Heart right ventricle (tissue), 16 donors: ENCODE measurements at regions of chr2 and their contacts with region 1.

Region 1: GRCh38 chr2:85712849-85713602 is 18.9 kb downstream of the GNLY start:
- DNase-seq: peak; percentile 58 to 64
- ATAC-seq: peak in 6 of 8 donors; percentile 5 to 80 (median 60)
- H3K4me3 ChIP-seq: no peak overlapping the region
- H3K27ac ChIP-seq: peak overlapping the region; percentile 67 to 96 (median 86)
- H3K4me1 ChIP-seq: peaks cover 9 to 80% (median 59%) of the 10 kb centered on the region in 9 donors
- H3K27me3 ChIP-seq: no peaks in the 10 kb centered on the region
- CTCF ChIP-seq: no peak

Region 2: DNA sequence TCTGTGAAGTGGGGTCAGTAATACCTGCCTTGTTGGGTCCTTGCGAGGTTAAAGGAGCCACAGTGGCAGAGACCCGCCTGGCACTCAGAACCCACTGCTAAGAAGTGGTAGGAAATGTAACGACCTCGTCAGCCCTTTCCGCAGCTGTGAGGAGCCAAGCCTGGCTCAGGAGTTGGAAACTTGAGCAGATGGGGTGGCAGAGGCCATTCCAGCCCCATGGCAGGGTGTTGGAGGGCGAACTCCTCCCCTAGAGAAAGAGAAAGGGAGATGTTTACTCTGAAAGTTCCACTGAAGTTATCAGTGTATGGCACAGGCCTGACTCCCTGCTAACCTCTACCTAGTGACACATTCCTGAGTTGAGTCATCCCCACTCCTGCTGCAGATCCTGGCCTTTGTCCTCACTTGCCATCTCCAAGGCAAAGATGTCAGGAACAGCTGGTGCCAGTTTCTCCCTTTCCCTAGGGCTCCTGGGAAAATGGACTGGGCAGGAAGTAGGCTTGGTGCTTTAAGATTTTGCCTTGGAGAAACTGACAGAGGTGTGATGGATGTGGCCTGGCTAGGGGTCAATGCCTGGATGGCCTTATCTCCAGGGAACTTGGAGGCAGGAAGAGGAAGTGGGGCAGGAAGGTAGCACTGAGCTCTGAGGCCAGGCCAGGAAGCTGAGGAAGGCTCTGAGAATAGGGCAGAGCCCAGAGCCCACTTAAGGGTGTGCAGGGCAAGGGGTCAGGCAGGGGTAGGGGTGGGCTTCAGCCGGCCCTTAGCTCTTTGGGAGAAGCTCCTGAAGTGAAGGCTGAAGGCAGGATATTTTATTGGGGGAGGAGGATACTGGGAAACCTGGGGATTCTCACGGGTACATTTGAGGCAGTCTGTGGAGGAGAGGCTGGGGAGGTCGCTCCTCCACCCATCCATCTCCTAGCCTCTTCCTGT is 127.9 kb before region 1 on chr2:
- intact Hi-C with region 1: no loop called
- DNase-seq: peak in 1 of 2 donors; percentile 54
- ATAC-seq: peak; percentile 36 to 78 (median 68)
- H3K4me3 ChIP-seq: peak overlapping the region; percentile 45 to 83 (median 76)
- H3K27ac ChIP-seq: peak overlapping the region; percentile 62 to 97 (median 93)
- H3K4me1 ChIP-seq: peaks cover 11 to 80% (median 64%) of the 10 kb centered on the region in 9 donors
- H3K27me3 ChIP-seq: no peaks in the 10 kb centered on the region
- CTCF ChIP-seq: no peak

Region 3: DNA sequence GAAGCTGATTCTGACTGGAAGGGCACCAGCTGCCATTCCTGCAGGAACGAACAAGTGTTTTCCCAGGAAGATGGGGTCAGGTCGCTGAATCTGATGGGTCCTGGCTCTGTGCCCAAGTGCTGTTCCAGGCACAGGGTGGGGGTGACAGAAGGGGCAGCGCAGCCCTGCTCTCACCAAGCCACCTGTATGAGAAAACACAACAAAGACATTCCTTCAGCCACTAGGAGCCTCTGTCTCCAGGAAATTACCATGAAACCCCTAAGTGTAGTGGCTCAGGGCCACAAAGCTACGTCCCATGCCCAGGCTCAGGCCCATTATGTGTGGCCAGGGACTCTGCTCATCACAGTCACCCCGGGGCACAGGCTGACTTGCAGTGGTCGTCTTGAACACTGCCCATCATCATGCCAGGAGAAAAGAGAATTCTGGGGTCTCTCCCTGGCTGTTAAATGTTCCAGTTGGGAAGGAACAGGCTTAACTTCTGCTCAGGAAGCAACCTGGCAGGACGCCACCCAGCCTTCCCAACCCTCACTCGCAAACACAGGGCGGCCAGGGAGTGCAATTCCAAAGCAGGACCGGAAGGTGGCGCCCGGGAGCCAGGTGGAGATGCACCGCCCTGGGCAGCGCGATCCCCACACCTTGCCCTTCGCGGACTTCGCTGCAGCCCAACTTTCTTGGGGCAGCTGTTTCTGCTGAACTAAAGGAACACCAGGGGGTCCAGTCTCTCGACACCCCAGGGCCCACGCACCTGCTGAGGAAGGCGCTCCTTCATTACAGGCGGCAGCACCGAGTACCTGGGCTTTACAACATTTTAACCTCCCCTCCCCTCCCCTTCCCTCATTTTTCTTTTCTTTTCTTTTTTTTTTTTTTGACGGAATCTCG is 34.0 kb before region 1 on chr2:
- intact Hi-C with region 1: loop called in 1 of 10 experiments (anchors 5 kb)
- DNase-seq: peak; percentile 89 to 91
- ATAC-seq: peak; percentile 86 to 96 (median 92)
- H3K4me3 ChIP-seq: no peak overlapping the region
- H3K27ac ChIP-seq: peak overlapping the region; percentile 2 to 79 (median 46)
- H3K4me1 ChIP-seq: peaks cover 9 to 45% (median 32%) of the 10 kb centered on the region in 9 donors
- H3K27me3 ChIP-seq: no peaks in the 10 kb centered on the region
- CTCF ChIP-seq: peak; percentile 97 to 99 (median 98)

Region 4: GRCh38 chr2:85772019-85772745 is 59.2 kb after region 1 on chr2:
- intact Hi-C with region 1: loop called in 1 of 10 experiments (anchors 2 kb)
- DNase-seq: peak; percentile 98 to 99
- ATAC-seq: peak; percentile 88 to 93 (median 91)
- H3K4me3 ChIP-seq: peak overlapping the region in 8 of 10 donors; percentile 6 to 45 (median 28)
- H3K27ac ChIP-seq: peak overlapping the region; percentile 86 to 96 (median 91)
- H3K4me1 ChIP-seq: peaks cover 73 to 98% (median 93%) of the 10 kb centered on the region in 9 donors
- H3K27me3 ChIP-seq: peaks cover 0 to 5% (median 0%) of the 10 kb centered on the region in 7 donors
- CTCF ChIP-seq: peak in 4 of 9 donors; percentile 24 to 51 (median 36)